Endothelial cell of umbilical vein (primary cell): ENCODE measurements at regions of chr10 and their contacts with region 1.

Region 1: DNA sequence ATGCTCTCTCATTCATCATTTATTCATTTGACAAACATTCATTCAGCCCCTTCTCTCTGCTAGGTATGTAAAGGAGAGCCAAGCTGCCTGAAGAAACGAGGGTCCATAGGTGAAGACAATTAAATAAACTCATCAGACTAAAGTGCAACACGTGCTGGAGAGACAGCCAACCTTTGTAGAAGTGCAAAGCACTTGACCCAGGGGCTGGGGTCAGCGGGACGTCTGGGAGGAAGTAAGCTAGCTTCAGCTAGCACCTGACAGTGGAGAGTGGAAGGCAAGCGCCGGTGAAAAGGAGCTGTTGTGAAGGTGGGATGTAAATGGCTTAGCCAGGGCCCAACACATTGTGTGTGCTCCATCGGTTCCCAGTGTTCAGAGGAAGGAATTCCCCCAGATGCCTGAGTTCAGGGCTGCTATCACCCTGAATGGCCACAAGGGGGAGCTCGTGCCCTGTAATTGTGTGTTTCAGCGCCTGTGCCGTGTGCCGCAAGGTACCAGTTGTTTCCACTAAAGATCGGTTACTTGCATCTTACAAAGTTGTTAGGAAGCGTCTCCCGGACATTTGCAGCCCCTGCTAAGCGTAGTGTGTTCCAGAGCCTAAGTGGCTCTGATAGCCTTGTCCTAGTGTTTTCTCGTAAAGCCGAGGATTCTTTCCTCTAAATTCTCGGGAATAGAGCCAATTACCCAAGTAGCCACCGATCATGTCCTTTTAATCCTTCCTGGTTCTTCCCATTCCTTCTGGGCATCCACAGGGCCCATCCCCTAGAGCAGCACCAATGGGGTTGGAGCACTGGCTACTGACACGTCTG is 30.6 kb downstream of the TLX1 start:
- DNase-seq: peak; percentile 74
- H3K4me3 ChIP-seq: no peak overlapping the region
- H3K27ac ChIP-seq: no peak overlapping the region
- H3K4me1 ChIP-seq: no peaks in the 10 kb centered on the region
- H3K27me3 ChIP-seq: peaks cover 25 to 34% of the 10 kb centered on the region in 2 experiments
- CTCF ChIP-seq: peak; percentile 94 to 98
- POLR2A ChIP-seq: no peak

Region 2: GRCh38 chr10:101172741-101173140 is 11.0 kb after region 1 on chr10:
- CTCF ChIA-PET with region 1: interaction called, 29 read pairs
- POLR2A ChIA-PET with region 1: no interaction called
- dilution Hi-C with region 1: no loop called
- intact Hi-C with region 1: no loop called
- DNase-seq: no peak
- H3K4me3 ChIP-seq: no peak overlapping the region
- H3K27ac ChIP-seq: no peak overlapping the region
- H3K4me1 ChIP-seq: no peaks in the 10 kb centered on the region
- H3K27me3 ChIP-seq: peaks cover 0 to 2% of the 10 kb centered on the region in 2 experiments
- CTCF ChIP-seq: no peak
- POLR2A ChIP-seq: no peak

Region 3: GRCh38 chr10:101182936-101183335 is 21.2 kb after region 1 on chr10:
- CTCF ChIA-PET with region 1: interaction called, 12 read pairs
- POLR2A ChIA-PET with region 1: no interaction called
- dilution Hi-C with region 1: no loop called
- intact Hi-C with region 1: no loop called
- DNase-seq: no peak
- H3K4me3 ChIP-seq: no peak overlapping the region
- H3K27ac ChIP-seq: no peak overlapping the region
- H3K4me1 ChIP-seq: no peaks in the 10 kb centered on the region
- H3K27me3 ChIP-seq: peaks cover 4 to 10% of the 10 kb centered on the region in 2 experiments
- CTCF ChIP-seq: no peak
- POLR2A ChIP-seq: no peak

Region 4: GRCh38 chr10:101238732-101239105 is 77.0 kb after region 1 on chr10:
- CTCF ChIA-PET with region 1: interaction called, 4 read pairs
- POLR2A ChIA-PET with region 1: no interaction called
- dilution Hi-C with region 1: no loop called
- intact Hi-C with region 1: loop called (anchors 1 kb)
- DNase-seq: no peak
- H3K4me3 ChIP-seq: no peak overlapping the region
- H3K27ac ChIP-seq: no peak overlapping the region
- H3K4me1 ChIP-seq: peaks cover 2% of the 10 kb centered on the region
- H3K27me3 ChIP-seq: peaks cover 73 to 77% of the 10 kb centered on the region in 2 experiments
- CTCF ChIP-seq: peak; percentile 84 to 92
- POLR2A ChIP-seq: no peak

Region 5: GRCh38 chr10:101291331-101292193 is 129.9 kb after region 1 on chr10:
- CTCF ChIA-PET with region 1: interaction called, 9 read pairs
- POLR2A ChIA-PET with region 1: no interaction called
- dilution Hi-C with region 1: no loop called
- intact Hi-C with region 1: loop called (anchors 5 kb)
- DNase-seq: peak; percentile 33
- H3K4me3 ChIP-seq: peak overlapping the region in 2 of 3 experiments; percentile 32 to 46
- H3K27ac ChIP-seq: no peak overlapping the region
- H3K4me1 ChIP-seq: peaks cover 2% of the 10 kb centered on the region
- H3K27me3 ChIP-seq: peaks cover 54 to 56% of the 10 kb centered on the region in 2 experiments
- CTCF ChIP-seq: peak; percentile 61 to 90
- POLR2A ChIP-seq: no peak